ENCODE measurements at regions of chr17 and their contacts with region 1.

Region 1: DNA sequence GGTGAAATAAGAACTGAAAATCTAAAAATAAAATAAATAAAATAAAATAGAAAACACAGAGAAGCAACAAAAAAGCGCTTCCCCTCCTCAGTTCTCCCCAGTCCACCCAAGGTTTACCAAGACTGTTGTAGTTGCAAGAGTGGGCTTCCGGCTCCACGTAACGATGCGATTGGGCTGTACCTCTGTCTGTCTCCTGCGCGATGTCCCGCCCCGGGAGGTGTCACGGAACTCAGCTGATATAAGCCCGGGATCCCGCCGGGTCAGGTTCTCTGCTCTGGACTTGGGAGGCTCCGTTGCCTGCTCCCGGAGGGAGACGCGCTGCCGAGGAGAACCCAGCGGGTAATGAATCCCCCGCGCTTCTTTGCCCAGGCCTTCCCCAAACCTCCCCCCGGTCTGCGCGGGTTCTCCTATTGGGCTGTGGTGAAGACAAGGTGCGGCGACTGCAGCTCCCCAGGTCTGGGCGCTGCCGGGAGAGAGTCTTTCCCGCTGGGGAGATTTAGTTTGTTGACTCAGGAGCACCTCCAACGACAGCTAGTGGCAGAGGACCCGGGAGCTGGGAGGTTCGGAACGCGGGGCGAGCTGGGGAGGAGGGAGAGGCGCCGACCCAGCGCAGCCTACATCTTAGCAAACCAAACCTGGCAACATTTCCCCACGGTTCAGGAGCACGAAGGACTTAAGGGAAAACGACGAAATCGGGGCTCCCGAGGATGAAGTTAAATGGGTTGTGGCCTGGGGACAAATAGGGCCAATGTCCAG is at the start of gene SLFN5:
- DNase-seq: peak; percentile 82 to 97 (median 94)
- ATAC-seq: peak; percentile 88
- H3K4me3 ChIP-seq: peak within 1 kb of the TSS; percentile 97
- H3K4me3 Mint-ChIP-seq: peak within 1 kb of the TSS; percentile 91 to 100 (median 100)
- H3K27ac ChIP-seq: peak within 1 kb of the TSS; percentile 85
- H3K27ac Mint-ChIP-seq: peak within 1 kb of the TSS; percentile 94 to 100 (median 99)
- H3K4me1 ChIP-seq: peaks cover 35 to 51% of the 10 kb centered on the region in 2 donors
- H3K4me1 Mint-ChIP-seq: peaks cover 32 to 62% (median 41%) of the 10 kb centered on the region in 7 donors
- H3K27me3 ChIP-seq: no peaks in the 10 kb centered on the region
- H3K27me3 Mint-ChIP-seq: no peaks in the 10 kb centered on the region
- total RNA-seq, gene SLFN5: 80.0 to 199 (median 133) TPM

Region 2: DNA sequence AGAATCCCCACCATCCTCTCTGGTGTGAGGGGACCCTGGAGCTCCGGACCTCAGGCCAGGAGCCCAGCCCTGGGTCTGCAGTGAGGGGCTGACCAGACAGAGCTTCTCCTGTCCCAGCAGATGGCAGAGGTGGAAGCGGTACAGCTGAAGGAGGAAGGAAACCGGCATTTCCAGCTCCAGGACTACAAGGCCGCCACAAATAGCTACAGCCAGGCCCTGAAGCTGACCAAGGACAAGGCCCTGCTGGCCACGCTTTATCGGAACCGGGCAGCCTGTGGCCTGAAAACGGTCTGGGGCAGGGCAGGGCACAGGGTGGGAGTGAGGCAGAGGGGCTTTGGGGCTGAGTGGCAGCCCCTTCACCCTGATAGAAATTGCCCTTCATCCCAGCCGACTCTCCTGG is 94.8 kb before region 1 on chr17:
- CTCF ChIA-PET with region 1: interaction called, 4 read pairs
- POLR2A ChIA-PET with region 1: interaction called, 32 read pairs
- intact Hi-C with region 1: no loop called
- DNase-seq: no peak
- ATAC-seq: no peak
- H3K4me3 ChIP-seq: no peak overlapping the region
- H3K4me3 Mint-ChIP-seq: no peak overlapping the region
- H3K27ac ChIP-seq: no peak overlapping the region
- H3K27ac Mint-ChIP-seq: no peak overlapping the region
- H3K4me1 ChIP-seq: no peaks in the 10 kb centered on the region
- H3K4me1 Mint-ChIP-seq: peaks cover 0 to 8% (median 6%) of the 10 kb centered on the region in 7 donors
- H3K27me3 ChIP-seq: no peaks in the 10 kb centered on the region
- H3K27me3 Mint-ChIP-seq: peaks cover 0 to 12% (median 0%) of the 10 kb centered on the region in 5 donors

Region 3: GRCh38 chr17:35183332-35183731 is 59.7 kb before region 1 on chr17:
- CTCF ChIA-PET with region 1: interaction called, 3 read pairs
- POLR2A ChIA-PET with region 1: interaction called, 57 read pairs
- intact Hi-C with region 1: no loop called
- DNase-seq: no peak
- ATAC-seq: no peak
- H3K4me3 ChIP-seq: no peak overlapping the region
- H3K4me3 Mint-ChIP-seq: no peak overlapping the region
- H3K27ac ChIP-seq: no peak overlapping the region
- H3K27ac Mint-ChIP-seq: peak overlapping the region in 3 of 9 donors; percentile 18 to 78 (median 54)
- H3K4me1 ChIP-seq: peaks cover 13 to 32% of the 10 kb centered on the region in 2 donors
- H3K4me1 Mint-ChIP-seq: peaks cover 40 to 83% (median 71%) of the 10 kb centered on the region in 7 donors
- H3K27me3 ChIP-seq: no peaks in the 10 kb centered on the region
- H3K27me3 Mint-ChIP-seq: no peaks in the 10 kb centered on the region

Region 4: DNA sequence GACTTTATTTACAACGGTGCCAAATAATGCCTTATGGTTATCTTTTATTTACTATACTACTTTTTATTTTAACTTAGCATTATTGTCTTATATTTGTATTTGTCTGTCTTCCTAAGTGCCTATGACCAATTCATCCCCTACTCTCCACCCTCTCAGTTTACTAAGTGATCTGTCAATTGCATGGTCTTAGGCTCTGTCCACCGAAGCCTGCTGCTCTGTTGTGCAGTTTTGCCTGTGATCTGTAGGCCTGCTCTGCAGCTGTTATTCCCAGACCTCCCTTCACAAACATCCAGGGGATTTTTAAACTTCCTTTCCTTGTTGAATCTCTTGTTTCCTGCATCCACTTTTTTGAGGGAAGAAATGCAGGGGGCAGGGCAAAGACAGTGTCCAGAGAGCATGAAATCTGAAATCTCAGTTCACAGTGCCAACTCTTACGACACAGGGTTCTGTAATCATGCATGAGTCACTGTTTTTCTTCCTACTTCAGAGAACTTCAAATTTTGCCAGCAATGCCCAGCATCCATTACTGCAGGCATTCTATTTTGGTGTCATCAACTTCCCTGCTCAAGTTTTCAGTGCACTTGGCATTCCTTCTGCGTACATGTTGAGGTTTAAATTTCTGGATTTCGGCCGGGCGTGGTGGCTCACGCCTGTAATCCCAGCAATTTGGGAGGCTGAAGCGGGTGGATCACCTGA is 11.3 kb after region 1 on chr17:
- CTCF ChIA-PET with region 1: no interaction called
- POLR2A ChIA-PET with region 1: interaction called, 28 read pairs
- intact Hi-C with region 1: loop called in 1 of 2 experiments (anchors 1 kb)
- DNase-seq: no peak
- ATAC-seq: peak; percentile 72
- H3K4me3 ChIP-seq: no peak overlapping the region
- H3K4me3 Mint-ChIP-seq: peak overlapping the region in 9 of 10 donors; percentile 26 to 71 (median 62)
- H3K27ac ChIP-seq: peak overlapping the region; percentile 28
- H3K27ac Mint-ChIP-seq: peak overlapping the region; percentile 2 to 100 (median 88)
- H3K4me1 ChIP-seq: peaks cover 33 to 66% of the 10 kb centered on the region in 2 donors
- H3K4me1 Mint-ChIP-seq: peaks cover 46 to 94% (median 87%) of the 10 kb centered on the region in 7 donors
- H3K27me3 ChIP-seq: no peaks in the 10 kb centered on the region
- H3K27me3 Mint-ChIP-seq: no peaks in the 10 kb centered on the region

Region 5: GRCh38 chr17:35373534-35373983 is 130.6 kb after region 1 on chr17 and contains the start of gene SLFN11:
- CTCF ChIA-PET with region 1: no interaction called
- POLR2A ChIA-PET with region 1: interaction called, 18 read pairs
- intact Hi-C with region 1: loop called (anchors 2 kb)
- DNase-seq: peak; percentile 49 to 94 (median 80)
- ATAC-seq: peak; percentile 92
- H3K4me3 ChIP-seq: peak within 1 kb of the TSS; percentile 92
- H3K4me3 Mint-ChIP-seq: peak within 1 kb of the TSS; percentile 94 to 99 (median 98)
- H3K27ac ChIP-seq: peak within 1 kb of the TSS; percentile 99
- H3K27ac Mint-ChIP-seq: peak within 1 kb of the TSS; percentile 92 to 99 (median 99)
- H3K4me1 ChIP-seq: peaks cover 2 to 13% of the 10 kb centered on the region in 2 donors
- H3K4me1 Mint-ChIP-seq: peaks cover 23 to 74% (median 54%) of the 10 kb centered on the region in 7 donors
- H3K27me3 ChIP-seq: no peaks in the 10 kb centered on the region
- H3K27me3 Mint-ChIP-seq: peaks cover 0 to 8% (median 0%) of the 10 kb centered on the region in 5 donors
- total RNA-seq, gene SLFN11: 13.8 to 71.9 (median 29.7) TPM

Region 6: GRCh38 chr17:35423761-35424160 is 180.8 kb after region 1 on chr17:
- CTCF ChIA-PET with region 1: no interaction called
- POLR2A ChIA-PET with region 1: no interaction called
- intact Hi-C with region 1: no loop called
- DNase-seq: no peak
- ATAC-seq: no peak
- H3K4me3 ChIP-seq: no peak overlapping the region
- H3K4me3 Mint-ChIP-seq: no peak overlapping the region
- H3K27ac ChIP-seq: no peak overlapping the region
- H3K27ac Mint-ChIP-seq: no peak overlapping the region
- H3K4me1 ChIP-seq: peaks cover 5% of the 10 kb centered on the region in 2 donors
- H3K4me1 Mint-ChIP-seq: peaks cover 11 to 21% (median 13%) of the 10 kb centered on the region in 7 donors
- H3K27me3 ChIP-seq: no peaks in the 10 kb centered on the region
- H3K27me3 Mint-ChIP-seq: no peaks in the 10 kb centered on the region

Region 7: DNA sequence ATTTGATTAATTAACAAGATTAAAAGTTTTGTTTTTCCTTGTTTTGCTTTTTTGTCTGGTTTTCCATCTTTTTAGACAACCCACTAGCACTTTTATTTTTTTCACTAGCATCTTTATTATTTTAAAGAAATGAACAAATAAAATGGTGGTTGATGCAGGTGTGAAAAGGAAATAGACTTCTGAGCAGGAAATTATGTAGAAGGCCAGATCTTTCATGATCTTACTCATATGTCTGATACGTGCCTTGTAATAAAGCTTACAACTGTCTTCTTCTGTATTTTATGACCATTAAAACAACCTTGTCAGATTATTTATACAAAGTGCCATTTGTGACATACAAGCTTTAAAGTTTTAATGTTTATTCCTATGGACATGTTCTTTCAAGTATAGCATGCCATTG is 288.2 kb after region 1 on chr17:
- CTCF ChIA-PET with region 1: interaction called, 20 read pairs
- POLR2A ChIA-PET with region 1: interaction called, 253 read pairs
- intact Hi-C with region 1: loop called in 1 of 2 experiments (anchors 1 kb)
- DNase-seq: no peak
- ATAC-seq: no peak
- H3K4me3 ChIP-seq: peak overlapping the region; percentile 28
- H3K4me3 Mint-ChIP-seq: peak overlapping the region in 8 of 10 donors; percentile 16 to 76 (median 55)
- H3K27ac ChIP-seq: peak overlapping the region; percentile 50
- H3K27ac Mint-ChIP-seq: peak overlapping the region in 8 of 9 donors; percentile 15 to 89 (median 60)
- H3K4me1 ChIP-seq: peaks cover 30 to 45% of the 10 kb centered on the region in 2 donors
- H3K4me1 Mint-ChIP-seq: peaks cover 46 to 84% (median 70%) of the 10 kb centered on the region in 7 donors
- H3K27me3 ChIP-seq: no peaks in the 10 kb centered on the region
- H3K27me3 Mint-ChIP-seq: no peaks in the 10 kb centered on the region

Region 8: DNA sequence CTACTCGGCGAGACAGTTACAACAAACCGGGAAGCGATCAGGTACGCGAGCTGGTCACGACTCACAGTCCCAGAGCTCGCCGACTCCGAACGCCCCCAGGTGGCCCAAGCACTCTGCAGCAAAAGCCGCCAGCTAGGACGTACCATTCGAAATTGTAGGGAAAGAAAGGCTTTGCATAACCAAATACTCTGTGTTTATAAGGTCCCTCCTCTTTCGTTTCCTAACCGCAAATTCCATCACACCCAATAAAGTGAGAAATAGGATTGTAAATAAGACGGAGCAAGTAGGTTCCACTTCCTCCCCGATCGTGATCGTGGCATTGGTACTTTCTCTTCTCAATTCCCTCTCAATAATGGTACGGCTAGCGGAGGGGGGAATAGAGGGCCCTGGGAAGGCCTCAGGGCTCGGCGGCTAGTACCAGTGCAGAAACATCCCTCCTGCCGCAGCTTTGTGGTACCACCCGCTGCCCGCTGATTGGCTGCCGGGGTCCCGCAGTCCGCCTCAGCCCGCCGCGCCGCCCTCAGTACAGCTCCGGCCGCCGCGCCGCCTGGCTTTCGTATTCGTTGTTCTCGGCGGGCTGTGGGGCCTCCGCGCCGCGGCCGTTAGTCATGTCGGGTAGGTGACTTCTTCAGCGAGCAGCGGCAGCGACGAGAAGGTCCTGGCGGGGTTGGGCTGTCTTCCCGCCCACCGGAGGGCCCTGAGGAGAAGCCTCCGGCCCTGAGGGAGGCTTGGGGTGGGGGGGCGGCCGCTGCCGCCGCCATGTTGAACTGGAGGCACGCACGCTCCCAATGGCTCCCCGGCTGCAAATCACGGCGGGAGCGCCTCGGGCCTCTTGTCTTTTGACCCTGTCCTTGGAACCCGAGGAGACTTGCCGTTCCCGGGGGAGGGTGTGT is 566.2 kb after region 1 on chr17 and contains the start of gene TAF15:
- CTCF ChIA-PET with region 1: no interaction called
- POLR2A ChIA-PET with region 1: no interaction called
- intact Hi-C with region 1: loop called (anchors 2 to 10 kb)
- DNase-seq: peak; percentile 85 to 97 (median 97)
- ATAC-seq: peak; percentile 97
- H3K4me3 ChIP-seq: peak within 1 kb of the TSS; percentile 91
- H3K4me3 Mint-ChIP-seq: peak within 1 kb of the TSS; percentile 86 to 99 (median 96)
- H3K27ac ChIP-seq: peak within 1 kb of the TSS; percentile 83
- H3K27ac Mint-ChIP-seq: peak within 1 kb of the TSS; percentile 91 to 99 (median 97)
- H3K4me1 ChIP-seq: peaks cover 33 to 37% of the 10 kb centered on the region in 2 donors
- H3K4me1 Mint-ChIP-seq: peaks cover 31 to 68% (median 57%) of the 10 kb centered on the region in 7 donors
- H3K27me3 ChIP-seq: no peaks in the 10 kb centered on the region
- H3K27me3 Mint-ChIP-seq: no peaks in the 10 kb centered on the region
- total RNA-seq, gene TAF15: 162 to 281 (median 243) TPM